Upper lobe of right lung (tissue), 1 donor: ENCODE measurements at regions of chr5 and their contacts with region 1.

Region 1: DNA sequence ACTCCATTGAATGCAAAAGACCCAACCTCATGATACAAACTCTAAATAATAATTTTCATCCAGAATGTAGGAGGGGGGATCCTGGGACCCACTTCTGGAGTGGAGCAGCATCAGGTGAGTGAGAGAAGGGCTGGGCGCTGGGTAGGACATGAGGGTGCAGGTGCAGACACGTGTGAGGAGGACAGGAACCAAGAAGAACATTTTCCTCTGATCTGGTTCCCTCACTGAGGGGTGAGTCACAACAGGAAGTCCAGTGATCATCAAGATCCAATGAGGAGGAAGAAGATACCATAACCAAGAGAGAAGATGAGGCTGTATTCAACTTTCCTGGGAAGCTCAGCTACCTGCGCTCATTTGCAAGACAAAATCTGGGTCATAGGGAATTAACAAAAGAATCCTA is 57.4 kb downstream of the SFXN1 start:
- DNase-seq: no peak
- ATAC-seq: no peak
- H3K4me3 ChIP-seq: no peak overlapping the region
- H3K27ac ChIP-seq: no peak overlapping the region
- H3K4me1 ChIP-seq: peaks cover 8% of the 10 kb centered on the region
- H3K27me3 ChIP-seq: no peaks in the 10 kb centered on the region
- CTCF ChIP-seq: no peak

Region 2: DNA sequence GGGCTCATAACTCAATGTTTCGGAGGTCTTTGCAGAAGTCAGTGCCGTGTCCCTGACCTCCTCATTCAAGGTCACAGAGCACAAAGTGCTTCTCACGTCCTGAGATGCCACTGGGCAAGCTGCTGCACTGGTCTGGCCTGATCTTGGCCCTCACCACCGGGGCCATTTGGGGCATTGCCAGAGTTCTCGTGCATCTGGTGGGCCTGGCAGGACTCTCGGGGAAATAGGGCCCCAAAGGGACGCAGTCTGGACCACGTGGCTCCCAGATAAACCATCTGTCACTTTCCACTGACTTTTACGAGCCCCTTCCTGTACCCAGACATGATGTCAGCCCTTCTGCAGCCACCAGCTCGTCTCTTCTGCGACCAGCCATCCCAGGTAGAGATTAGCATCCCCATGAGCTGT is 176.9 kb after region 1 on chr5:
- intact Hi-C with region 1: loop called (anchors 5 kb)
- DNase-seq: peak; percentile 38
- ATAC-seq: no peak
- H3K4me3 ChIP-seq: no peak overlapping the region
- H3K27ac ChIP-seq: no peak overlapping the region
- H3K4me1 ChIP-seq: no peaks in the 10 kb centered on the region
- H3K27me3 ChIP-seq: no peaks in the 10 kb centered on the region
- CTCF ChIP-seq: no peak

Region 3: DNA sequence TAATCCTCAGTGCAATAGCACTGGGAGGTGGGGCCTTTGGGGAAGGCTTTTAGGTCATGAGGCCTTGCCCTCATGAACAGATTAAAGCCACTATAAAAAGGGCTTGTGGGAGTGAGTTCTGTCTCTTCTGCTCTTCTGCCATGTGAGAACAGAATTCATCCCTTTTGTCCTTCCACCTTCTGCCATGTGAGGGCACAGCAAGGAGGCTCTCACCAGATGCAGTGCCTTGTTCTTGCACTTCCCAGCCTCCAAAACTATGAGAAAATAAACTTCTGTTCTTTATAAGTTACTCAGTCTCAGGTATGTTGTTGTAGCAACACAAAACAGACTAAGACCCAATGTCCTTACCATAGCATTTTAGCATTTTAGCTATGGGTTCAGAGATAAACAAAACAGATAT is 253.9 kb after region 1 on chr5:
- intact Hi-C with region 1: no loop called
- DNase-seq: no peak
- ATAC-seq: no peak
- H3K4me3 ChIP-seq: no peak overlapping the region
- H3K27ac ChIP-seq: no peak overlapping the region
- H3K4me1 ChIP-seq: no peaks in the 10 kb centered on the region
- H3K27me3 ChIP-seq: peaks cover 17% of the 10 kb centered on the region
- CTCF ChIP-seq: no peak